ENCODE measurements at regions of chrX and their contacts with region 1.

Region 1: DNA sequence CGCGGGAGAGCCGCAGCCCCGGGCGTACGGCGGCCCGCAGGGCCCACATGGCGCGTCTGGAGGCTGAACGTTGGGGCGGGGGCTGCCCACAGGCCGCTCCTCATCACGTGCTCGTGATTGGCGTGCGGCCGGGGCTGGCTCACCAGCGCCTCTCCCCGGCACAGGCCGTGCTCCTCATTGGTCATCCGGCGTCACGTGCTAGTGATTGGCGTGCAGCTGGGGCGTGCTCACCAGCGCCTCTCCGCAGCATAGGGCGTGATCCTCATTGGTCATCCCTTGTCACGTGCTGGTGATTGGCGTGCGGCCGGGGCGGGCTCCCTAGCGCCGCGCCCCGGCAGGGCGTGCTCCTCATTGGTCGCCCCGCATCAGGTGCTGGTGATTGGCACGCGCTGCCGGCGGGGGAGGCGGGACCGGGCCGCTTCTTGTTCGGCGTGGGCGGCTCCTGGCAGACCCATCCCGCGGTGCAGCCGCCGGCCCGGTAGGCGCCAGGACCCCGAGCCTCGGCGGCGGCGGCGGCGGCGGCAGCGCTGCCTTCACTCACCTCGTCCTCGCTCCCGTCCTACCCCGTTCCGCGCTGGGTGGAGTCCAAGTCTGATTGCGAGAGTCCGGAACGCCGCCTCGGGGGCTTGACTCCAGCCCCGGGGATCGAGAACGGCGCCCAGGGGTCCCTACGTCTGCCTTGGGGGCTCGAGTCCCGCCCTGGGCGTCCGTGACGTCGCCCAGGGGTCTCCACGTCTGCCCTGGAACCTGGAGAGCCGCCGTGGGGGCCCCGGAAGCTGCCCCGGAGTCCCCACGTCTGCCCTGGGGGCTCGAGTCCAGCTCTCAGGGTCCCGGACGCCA is at the start of gene GTPBP6:
- DNase-seq: peak; percentile 99 to 100
- H3K4me3 ChIP-seq: peak within 1 kb of the TSS; percentile 74 to 98
- H3K27ac ChIP-seq: peak within 1 kb of the TSS; percentile 91 to 96
- H3K4me1 ChIP-seq: peaks cover 0 to 16% of the 10 kb centered on the region in 2 donors
- H3K27me3 ChIP-seq: no peaks in the 10 kb centered on the region
- CTCF ChIP-seq: peak in 2 of 3 experiments; percentile 18 to 21
- total RNA-seq, gene GTPBP6: 56.2 TPM

Region 2: DNA sequence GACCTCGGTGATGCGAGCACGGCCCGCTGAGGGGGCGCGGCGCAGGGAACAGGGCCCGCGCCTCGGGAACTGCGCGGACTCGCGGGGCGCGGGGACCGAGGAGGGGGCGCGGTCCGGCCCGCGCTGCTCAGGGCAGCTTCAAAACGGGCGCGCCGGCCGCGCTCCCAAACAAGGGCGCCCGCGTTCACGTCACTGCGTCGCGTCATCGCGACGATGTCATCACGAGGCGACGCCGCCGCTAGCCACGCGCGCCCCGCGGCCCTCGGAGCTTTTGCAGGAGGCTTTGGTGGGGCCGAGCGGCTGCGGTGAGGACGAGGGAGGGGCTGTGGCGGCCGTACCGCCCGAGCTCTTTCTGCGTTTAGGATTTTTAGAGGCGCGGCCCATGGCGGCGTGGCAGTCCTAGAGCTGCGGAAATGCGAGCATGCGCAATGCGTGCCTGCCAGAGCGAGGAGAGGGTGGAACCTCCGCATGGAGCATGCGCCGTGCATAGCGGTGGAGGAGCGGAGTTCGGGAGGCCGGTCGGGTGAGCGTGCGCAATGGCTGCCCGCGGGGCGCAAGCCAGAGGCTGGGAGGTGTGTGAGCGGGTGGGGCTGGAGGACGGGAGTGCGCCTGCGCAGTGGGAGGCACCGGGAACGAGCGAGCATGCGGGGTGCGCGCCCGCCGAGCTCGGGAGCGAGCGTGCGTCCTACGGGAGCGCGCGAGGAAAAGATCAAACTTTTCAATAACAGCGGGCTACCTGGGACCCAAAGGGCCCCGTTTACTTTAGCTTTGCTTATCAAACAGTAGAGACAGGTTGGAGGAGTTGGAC is 68.0 kb after region 1 on chrX and contains the start of gene PPP2R3B:
- intact Hi-C with region 1: loop called (anchors 1 kb)
- DNase-seq: peak; percentile 91 to 99
- H3K4me3 ChIP-seq: peak within 1 kb of the TSS; percentile 72 to 92
- H3K27ac ChIP-seq: peak within 1 kb of the TSS; percentile 94 to 99
- H3K4me1 ChIP-seq: peaks cover 0 to 5% of the 10 kb centered on the region in 2 donors
- H3K27me3 ChIP-seq: no peaks in the 10 kb centered on the region
- CTCF ChIP-seq: no peak
- total RNA-seq, gene PPP2R3B: 43.4 TPM

Region 3: GRCh38 chrX:413322-414201 is 94.6 kb after region 1 on chrX:
- intact Hi-C with region 1: no loop called
- DNase-seq: no peak
- H3K4me3 ChIP-seq: peak overlapping the region; percentile 35 to 51
- H3K27ac ChIP-seq: peak overlapping the region in 1 of 2 donors; percentile 4
- H3K4me1 ChIP-seq: no peaks in the 10 kb centered on the region
- H3K27me3 ChIP-seq: no peaks in the 10 kb centered on the region
- CTCF ChIP-seq: peak in 1 of 3 experiments; percentile 6